CD4-positive, alpha-beta memory T cell (primary cell): ENCODE measurements at regions of chr15 and their contacts with region 1.

Region 1: GRCh38 chr15:42604894-42605744 is 29.7 kb downstream of the STARD9 start:
- DNase-seq: no peak
- H3K4me3 ChIP-seq: no peak overlapping the region
- H3K4me3 Mint-ChIP-seq: peak overlapping the region in 7 of 8 donors; percentile 43 to 75 (median 61)
- H3K27ac ChIP-seq: no peak overlapping the region
- H3K27ac Mint-ChIP-seq: peak overlapping the region in 4 of 7 donors; percentile 38 to 67 (median 53)
- H3K4me1 ChIP-seq: peaks cover 37% of the 10 kb centered on the region
- H3K4me1 Mint-ChIP-seq: peaks cover 27 to 42% (median 32%) of the 10 kb centered on the region in 4 donors
- H3K27me3 ChIP-seq: no peaks in the 10 kb centered on the region
- H3K27me3 Mint-ChIP-seq: no peaks in the 10 kb centered on the region

Region 2: GRCh38 chr15:42581272-42581730 is 23.8 kb before region 1 on chr15:
- CTCF ChIA-PET with region 1: no interaction called
- POLR2A ChIA-PET with region 1: interaction called, 10 read pairs
- intact Hi-C with region 1: no loop called
- DNase-seq: peak; percentile 73 to 79 (median 77)
- H3K4me3 ChIP-seq: peak overlapping the region in 1 of 2 donors; percentile 51
- H3K4me3 Mint-ChIP-seq: peak overlapping the region; percentile 89 to 95 (median 91)
- H3K27ac ChIP-seq: peak overlapping the region; percentile 50
- H3K27ac Mint-ChIP-seq: peak overlapping the region; percentile 60 to 96 (median 94)
- H3K4me1 ChIP-seq: peaks cover 20% of the 10 kb centered on the region
- H3K4me1 Mint-ChIP-seq: peaks cover 15 to 41% (median 23%) of the 10 kb centered on the region in 4 donors
- H3K27me3 ChIP-seq: no peaks in the 10 kb centered on the region
- H3K27me3 Mint-ChIP-seq: peaks cover 6 to 11% of the 10 kb centered on the region in 2 donors